Activated CD8-positive, alpha-beta T cell treated with anti-CD3 and anti-CD28 coated beads for 36 hours (primary cell): ENCODE measurements at regions of chr15 and their contacts with region 1.

Region 1: GRCh38 chr15:74781431-74782258 is at the start of gene CSK:
- DNase-seq: peak; percentile 76
- ATAC-seq: peak; percentile 40
- H3K4me3 Mint-ChIP-seq: peak within 1 kb of the TSS; percentile 98
- H3K27ac Mint-ChIP-seq: peak within 1 kb of the TSS; percentile 98
- H3K4me1 Mint-ChIP-seq: peaks cover 46% of the 10 kb centered on the region
- H3K27me3 Mint-ChIP-seq: no peaks in the 10 kb centered on the region
- CTCF ChIP-seq: peak; percentile 66
- total RNA-seq, gene CSK: 254 to 260 TPM

Region 2: DNA sequence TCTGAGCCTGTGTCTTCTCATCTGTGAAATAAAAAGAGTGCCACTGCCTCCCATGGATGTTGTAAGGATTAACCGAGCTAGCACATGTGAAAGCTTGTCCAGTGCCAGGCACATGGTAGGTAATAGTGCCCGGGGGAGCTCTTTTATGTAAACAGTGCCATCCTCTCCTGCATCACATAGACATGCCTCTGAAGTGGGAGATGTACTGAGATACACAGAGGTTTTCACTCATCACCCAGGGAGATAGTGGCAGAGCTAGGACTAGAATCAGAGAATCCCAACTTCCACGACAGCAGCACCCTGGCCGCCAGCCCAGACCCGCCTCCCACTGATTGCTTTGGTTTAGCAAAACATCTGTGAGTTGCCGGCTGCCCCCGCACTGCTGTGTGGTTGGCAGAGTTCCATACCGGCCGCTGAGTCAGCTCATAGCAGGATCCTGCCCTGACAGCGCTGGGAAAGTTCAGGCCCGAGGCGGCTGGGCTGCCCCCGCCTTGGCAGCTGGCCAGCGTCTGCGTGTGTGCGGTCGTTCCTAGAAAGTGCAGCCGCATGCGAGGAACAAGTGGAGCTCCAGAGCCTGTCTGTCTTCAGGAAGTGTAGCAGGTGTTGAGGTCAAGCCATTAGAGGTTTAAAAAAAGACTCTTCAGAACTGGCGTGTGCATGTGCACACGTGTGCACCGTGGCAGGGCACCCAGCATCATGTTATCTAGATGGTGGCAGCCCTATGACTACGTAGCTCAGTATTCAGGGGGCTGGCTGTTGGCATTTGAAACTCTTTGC is 235.6 kb before region 1 on chr15:
- CTCF ChIA-PET with region 1: interaction called, 3 read pairs
- POLR2A ChIA-PET with region 1: interaction called, 4 read pairs
- intact Hi-C with region 1: loop called (anchors 5 kb)
- DNase-seq: peak; percentile 99
- ATAC-seq: peak; percentile 75
- H3K4me3 Mint-ChIP-seq: peak overlapping the region; percentile 63
- H3K27ac Mint-ChIP-seq: peak overlapping the region; percentile 72
- H3K4me1 Mint-ChIP-seq: peaks cover 80% of the 10 kb centered on the region
- H3K27me3 Mint-ChIP-seq: no peaks in the 10 kb centered on the region
- CTCF ChIP-seq: no peak

Region 3: DNA sequence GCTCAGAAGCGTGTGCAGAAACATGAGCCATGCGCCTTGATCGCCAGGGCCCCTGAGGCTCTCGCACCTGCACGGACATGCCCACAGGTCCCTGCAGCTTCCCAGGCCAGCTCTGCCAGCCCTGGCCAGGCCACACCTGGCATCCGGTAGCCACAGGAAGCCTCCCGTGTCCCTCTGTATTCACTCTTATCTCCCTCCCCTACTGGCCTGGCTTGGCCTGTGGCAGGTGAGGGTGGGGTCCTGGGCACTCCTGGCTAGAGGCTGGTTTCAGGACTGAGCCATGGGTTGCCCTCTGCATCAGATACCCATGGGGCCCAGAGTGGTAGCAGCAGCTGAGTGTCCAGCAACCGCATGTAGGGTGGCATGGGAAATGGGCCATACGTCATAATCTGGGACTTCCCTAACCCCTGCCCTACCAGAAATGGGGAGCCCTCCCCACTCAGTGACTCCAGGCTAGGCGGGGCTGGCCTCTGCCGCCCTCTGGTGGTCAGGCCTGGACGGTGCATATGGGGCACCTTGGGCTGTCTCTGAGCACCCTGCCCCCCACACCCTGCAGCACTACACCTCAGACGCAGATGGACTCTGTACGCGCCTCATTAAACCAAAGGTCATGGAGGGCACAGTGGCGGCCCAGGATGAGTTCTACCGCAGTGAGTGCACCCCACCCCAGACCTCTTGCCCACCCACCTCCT is 18.4 kb after region 1 on chr15:
- CTCF ChIA-PET with region 1: interaction called, 1,327 read pairs
- POLR2A ChIA-PET with region 1: interaction called, 410 read pairs
- intact Hi-C with region 1: no loop called
- DNase-seq: peak; percentile 91
- ATAC-seq: peak; percentile 91
- H3K4me3 Mint-ChIP-seq: no peak overlapping the region
- H3K27ac Mint-ChIP-seq: peak overlapping the region; percentile 90
- H3K4me1 Mint-ChIP-seq: peaks cover 46% of the 10 kb centered on the region
- H3K27me3 Mint-ChIP-seq: no peaks in the 10 kb centered on the region
- CTCF ChIP-seq: peak; percentile 98

Region 4: DNA sequence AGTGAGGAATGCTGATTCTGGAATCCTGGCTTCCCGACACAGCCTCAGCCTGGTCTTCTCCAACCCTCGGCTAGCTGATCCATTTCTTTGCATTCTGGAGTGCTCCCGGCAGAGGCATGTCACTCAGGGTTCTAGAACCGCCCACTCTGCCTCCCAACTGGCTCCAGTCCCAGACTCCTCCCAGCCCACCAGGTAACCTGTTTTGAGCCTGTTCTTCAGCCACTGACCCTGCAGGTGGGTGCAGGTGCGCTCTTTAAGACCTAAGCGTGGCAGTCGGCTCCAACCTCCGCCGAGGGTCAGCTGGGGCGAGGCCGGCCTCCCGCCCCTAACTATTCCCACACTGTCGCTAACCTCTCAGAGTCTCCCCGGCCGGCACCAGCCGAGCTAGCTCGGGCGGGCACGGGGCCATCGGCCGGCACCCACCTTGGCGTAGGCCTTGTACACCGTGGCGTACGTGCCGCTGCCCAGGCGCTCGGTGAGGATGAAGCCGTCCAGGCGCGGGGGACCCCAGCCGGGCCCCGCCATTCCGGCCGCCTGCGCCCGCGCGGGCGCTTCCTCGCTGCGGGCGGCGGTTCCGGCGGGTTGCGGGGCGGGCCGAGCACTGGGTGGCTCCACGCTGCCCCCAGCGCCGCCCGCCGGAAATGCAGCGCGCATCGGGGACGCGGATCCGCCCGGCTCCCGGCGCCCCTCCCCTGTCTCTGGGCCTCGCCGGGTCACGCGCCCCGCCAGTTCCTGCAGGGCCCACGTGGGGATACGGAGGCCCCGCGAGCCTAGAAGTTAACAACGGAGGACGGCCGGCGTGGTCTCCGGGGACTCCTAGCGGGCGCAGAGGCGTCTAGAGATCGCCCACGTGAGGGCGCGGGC is 61.2 kb after region 1 on chr15 and contains the start of gene ULK3:
- CTCF ChIA-PET with region 1: interaction called, 6 read pairs
- POLR2A ChIA-PET with region 1: interaction called, 7 read pairs
- intact Hi-C with region 1: loop called (anchors 5 kb)
- DNase-seq: peak; percentile 94
- ATAC-seq: peak; percentile 92
- H3K4me3 Mint-ChIP-seq: peak within 1 kb of the TSS; percentile 90
- H3K27ac Mint-ChIP-seq: peak within 1 kb of the TSS; percentile 94
- H3K4me1 Mint-ChIP-seq: peaks cover 44% of the 10 kb centered on the region
- H3K27me3 Mint-ChIP-seq: no peaks in the 10 kb centered on the region
- CTCF ChIP-seq: peak; percentile 89
- total RNA-seq, gene ULK3: 45.9 to 49.3 TPM

Region 5: GRCh38 chr15:75008629-75009326 is 227.1 kb after region 1 on chr15:
- CTCF ChIA-PET with region 1: no interaction called
- POLR2A ChIA-PET with region 1: no interaction called
- intact Hi-C with region 1: no loop called
- DNase-seq: no peak
- ATAC-seq: no peak
- H3K4me3 Mint-ChIP-seq: no peak overlapping the region
- H3K27ac Mint-ChIP-seq: no peak overlapping the region
- H3K4me1 Mint-ChIP-seq: no peaks in the 10 kb centered on the region
- H3K27me3 Mint-ChIP-seq: peaks cover 2% of the 10 kb centered on the region
- CTCF ChIP-seq: no peak